ENCODE measurements at regions of chr10 and their contacts with region 1.

Region 1: GRCh38 chr10:71268247-71268691 is 50.8 kb upstream of the SLC29A3 start:
- DNase-seq: peak in 7 of 10 donors; percentile 48 to 77 (median 64)
- H3K4me3 ChIP-seq: no peak overlapping the region
- H3K27ac ChIP-seq: peak overlapping the region in 52 of 59 donors; percentile 1 to 86 (median 58)
- H3K27me3 ChIP-seq: no peaks in the 10 kb centered on the region
- CTCF ChIP-seq: peak in 55 of 56 donors; percentile 37 to 78 (median 62)

Region 2: DNA sequence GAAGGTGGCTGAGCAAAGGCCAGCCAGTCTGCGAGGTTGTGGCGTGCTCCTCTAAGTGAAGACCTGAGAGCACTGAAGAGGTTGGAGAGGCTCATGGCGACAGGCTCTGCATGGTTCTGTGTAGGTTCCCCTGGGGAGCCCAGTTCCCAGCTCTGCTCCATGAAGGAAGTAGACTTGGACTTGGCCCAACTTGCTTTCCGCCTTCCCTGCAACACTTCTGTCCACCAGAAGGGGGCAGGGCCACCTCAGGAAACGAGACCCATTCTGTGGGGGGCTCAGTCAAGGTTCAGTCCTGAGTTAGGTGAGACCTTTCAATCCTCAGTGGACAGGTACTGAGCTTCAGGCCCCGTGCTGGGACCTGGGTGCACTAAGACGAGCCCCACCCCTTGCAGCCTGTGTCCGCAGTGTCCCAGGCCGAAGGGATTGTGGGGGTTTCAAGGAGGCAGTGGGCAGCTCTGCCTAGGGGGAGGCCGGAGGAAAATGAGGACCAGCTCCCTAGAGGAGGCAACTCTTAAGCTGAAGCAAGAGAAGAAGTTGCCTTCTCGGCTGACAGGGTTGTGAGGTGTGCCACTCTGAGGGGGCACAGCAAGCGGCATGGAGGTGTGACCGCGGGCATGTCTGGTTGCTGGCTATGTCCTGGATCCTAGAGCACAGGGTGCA is 364.9 kb before region 1 on chr10:
- intact Hi-C with region 1: loop called in 1 of 2 experiments (anchors 2 kb)
- DNase-seq: peak in 9 of 10 donors; percentile 40 to 75 (median 67)
- H3K4me3 ChIP-seq: no peak overlapping the region
- H3K27ac ChIP-seq: no peak overlapping the region
- H3K27me3 ChIP-seq: no peaks in the 10 kb centered on the region
- CTCF ChIP-seq: peak; percentile 67 to 94 (median 88)

Region 3: DNA sequence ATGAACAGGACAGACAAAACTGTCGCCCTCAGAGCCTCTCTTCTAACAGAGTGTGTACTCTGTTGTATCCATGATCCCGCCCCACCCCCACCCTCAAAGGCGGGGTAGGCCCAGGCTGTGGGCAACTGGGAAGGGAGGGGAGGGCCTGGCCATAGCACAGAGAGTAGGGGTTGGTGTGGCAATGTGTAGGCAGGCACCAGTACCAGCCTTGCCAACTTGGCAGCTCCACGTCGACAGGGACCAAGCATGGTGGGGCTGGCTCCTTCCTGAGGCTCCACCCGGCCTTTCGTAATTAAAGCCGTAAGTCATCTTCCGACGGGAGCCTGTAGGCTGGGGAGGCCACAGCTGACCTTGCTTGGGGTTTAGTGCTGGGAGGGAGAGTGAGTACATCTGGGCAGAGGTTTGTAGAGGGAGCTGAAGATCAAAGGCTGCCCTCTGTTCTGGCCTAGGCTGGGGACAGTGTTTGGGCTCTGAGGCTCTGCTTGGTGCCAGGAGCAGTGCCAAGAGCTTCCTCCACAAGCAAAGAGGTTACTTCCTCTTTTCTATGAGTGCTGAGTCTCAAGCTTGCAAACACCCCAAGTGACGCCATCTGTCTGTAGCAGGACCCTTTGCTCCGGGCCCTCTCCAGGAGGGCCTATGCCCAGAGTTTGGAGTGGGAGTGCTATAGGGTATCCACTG is 329.7 kb after region 1 on chr10:
- intact Hi-C with region 1: no loop called
- DNase-seq: peak in 9 of 10 donors; percentile 15 to 82 (median 67)
- H3K4me3 ChIP-seq: peak overlapping the region in 14 of 59 donors; percentile 2 to 38 (median 16)
- H3K27ac ChIP-seq: peak overlapping the region; percentile 45 to 97 (median 86)
- H3K27me3 ChIP-seq: no peaks in the 10 kb centered on the region
- CTCF ChIP-seq: peak in 4 of 56 donors; percentile 3 to 10 (median 8)